ENCODE measurements at regions of chr2 and their contacts with region 1.

Region 1: GRCh38 chr2:75676464-75676863 is 29.9 kb downstream of the MRPL19 start:
- DNase-seq: no peak
- H3K4me3 Mint-ChIP-seq: no peak overlapping the region
- H3K27ac Mint-ChIP-seq: no peak overlapping the region
- H3K4me1 Mint-ChIP-seq: peaks cover 6% of the 10 kb centered on the region
- H3K27me3 Mint-ChIP-seq: no peaks in the 10 kb centered on the region

Region 2: GRCh38 chr2:75640621-75641121 is 35.8 kb before region 1 on chr2:
- intact Hi-C with region 1: loop called (anchors 1 kb)
- DNase-seq: peak; percentile 85
- H3K4me3 Mint-ChIP-seq: no peak overlapping the region
- H3K27ac Mint-ChIP-seq: no peak overlapping the region
- H3K4me1 Mint-ChIP-seq: peaks cover 1% of the 10 kb centered on the region
- H3K27me3 Mint-ChIP-seq: peaks cover 22% of the 10 kb centered on the region